ENCODE measurements at regions of chr12 and their contacts with region 1.

Region 1: GRCh38 chr12:751192-751998 is 984 bp upstream of the WNK1 start:
- DNase-seq: peak; percentile 48
- H3K4me3 ChIP-seq: peak overlapping the region; percentile 75 to 92 (median 82)
- H3K27ac ChIP-seq: peak overlapping the region; percentile 99 to 100 (median 100)
- H3K4me1 ChIP-seq: peaks cover 6 to 38% (median 8%) of the 10 kb centered on the region in 3 donors
- H3K27me3 ChIP-seq: no peaks in the 10 kb centered on the region
- CTCF ChIP-seq: peak in 5 of 6 experiments; percentile 65 to 85 (median 76)
- POLR2A ChIP-seq: peak in 3 of 4 donors; percentile 32 to 75 (median 54)

Region 2: DNA sequence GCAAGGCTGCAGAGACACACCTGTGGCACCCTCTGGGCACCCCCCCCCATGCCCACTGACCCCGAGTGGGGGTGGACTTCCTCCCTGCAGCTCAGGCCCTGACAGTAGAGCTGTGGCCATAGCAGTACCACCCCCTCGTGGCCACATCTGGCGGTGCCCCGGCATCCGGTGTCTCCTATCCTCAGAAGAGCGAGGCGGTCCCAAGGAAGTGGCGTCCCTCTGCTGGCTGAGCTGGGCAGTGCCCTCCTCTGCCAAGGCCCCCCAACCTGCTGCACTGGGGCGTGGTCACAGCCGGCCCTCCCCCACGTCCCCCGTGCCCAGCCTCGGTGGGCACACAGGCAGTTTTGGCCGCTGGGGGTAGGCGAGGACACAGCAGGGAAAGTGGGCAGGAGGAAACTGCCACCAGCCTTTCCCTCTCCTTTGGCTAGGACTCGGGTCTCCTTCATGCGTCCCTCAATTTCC is 531.5 kb before region 1 on chr12:
- intact Hi-C with region 1: no loop called
- DNase-seq: no peak
- H3K4me3 ChIP-seq: no peak overlapping the region
- H3K27ac ChIP-seq: no peak overlapping the region
- H3K4me1 ChIP-seq: no peaks in the 10 kb centered on the region
- H3K27me3 ChIP-seq: peaks cover 0 to 55% (median 0%) of the 10 kb centered on the region in 4 donors
- CTCF ChIP-seq: peak in 5 of 6 experiments; percentile 37 to 74 (median 46)
- POLR2A ChIP-seq: no peak

Region 3: DNA sequence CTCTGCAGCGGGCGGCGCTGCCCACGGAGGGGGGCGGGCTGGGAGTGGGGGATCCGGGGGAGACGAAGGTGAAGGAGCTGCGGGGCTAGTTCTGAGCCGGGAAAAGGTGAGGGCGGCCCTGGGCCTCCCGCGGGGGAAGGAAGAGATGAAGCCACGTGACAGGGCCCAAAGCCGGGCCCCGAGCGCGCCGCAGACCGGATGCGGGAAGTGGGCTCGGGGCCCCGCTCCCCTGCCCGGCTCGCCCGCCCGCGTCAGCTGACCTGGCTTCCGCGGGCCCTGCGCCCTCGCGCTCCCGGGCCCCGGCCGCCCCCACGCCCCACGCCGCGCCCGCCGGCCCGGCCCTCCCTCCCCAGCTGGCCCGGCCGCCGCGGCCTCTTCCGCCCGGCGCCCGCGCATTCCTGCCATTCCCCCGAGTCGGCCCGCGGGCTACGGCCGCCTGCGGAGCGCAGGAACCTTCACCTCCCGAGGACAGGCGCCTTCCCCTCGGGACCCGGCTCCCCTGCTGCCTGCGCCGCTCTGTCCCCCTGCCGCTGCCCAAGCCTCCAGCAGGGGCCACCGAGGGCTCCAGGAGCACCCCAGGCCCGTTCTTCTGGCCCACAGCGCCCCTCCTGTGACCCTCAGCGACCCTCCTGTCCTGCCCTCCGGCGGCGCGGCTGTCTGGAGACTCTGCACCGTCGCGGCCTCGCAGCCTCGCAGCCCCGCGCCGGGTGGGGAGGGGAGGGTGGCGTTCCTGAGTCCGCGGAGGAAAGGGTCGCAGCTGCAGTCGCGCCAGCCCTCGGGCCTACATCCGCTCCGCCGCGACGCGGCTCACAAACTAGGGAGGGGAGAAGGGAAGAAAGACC is 108.5 kb before region 1 on chr12:
- intact Hi-C with region 1: loop called (anchors 10 kb)
- DNase-seq: no peak
- H3K4me3 ChIP-seq: peak overlapping the region; percentile 65 to 88 (median 74)
- H3K27ac ChIP-seq: peak overlapping the region; percentile 98 to 100 (median 98)
- H3K4me1 ChIP-seq: peaks cover 38 to 95% (median 55%) of the 10 kb centered on the region in 3 donors
- H3K27me3 ChIP-seq: no peaks in the 10 kb centered on the region
- CTCF ChIP-seq: peak in 4 of 6 experiments; percentile 17 to 53 (median 42)
- POLR2A ChIP-seq: peak in 2 of 4 donors; percentile 48 to 60

Region 4: GRCh38 chr12:810671-811415 is 59.4 kb after region 1 on chr12:
- intact Hi-C with region 1: loop called (anchors 10 kb)
- DNase-seq: no peak
- H3K4me3 ChIP-seq: no peak overlapping the region
- H3K27ac ChIP-seq: no peak overlapping the region
- H3K4me1 ChIP-seq: peaks cover 0 to 90% (median 22%) of the 10 kb centered on the region in 3 donors
- H3K27me3 ChIP-seq: no peaks in the 10 kb centered on the region
- CTCF ChIP-seq: no peak
- POLR2A ChIP-seq: no peak

Region 5: DNA sequence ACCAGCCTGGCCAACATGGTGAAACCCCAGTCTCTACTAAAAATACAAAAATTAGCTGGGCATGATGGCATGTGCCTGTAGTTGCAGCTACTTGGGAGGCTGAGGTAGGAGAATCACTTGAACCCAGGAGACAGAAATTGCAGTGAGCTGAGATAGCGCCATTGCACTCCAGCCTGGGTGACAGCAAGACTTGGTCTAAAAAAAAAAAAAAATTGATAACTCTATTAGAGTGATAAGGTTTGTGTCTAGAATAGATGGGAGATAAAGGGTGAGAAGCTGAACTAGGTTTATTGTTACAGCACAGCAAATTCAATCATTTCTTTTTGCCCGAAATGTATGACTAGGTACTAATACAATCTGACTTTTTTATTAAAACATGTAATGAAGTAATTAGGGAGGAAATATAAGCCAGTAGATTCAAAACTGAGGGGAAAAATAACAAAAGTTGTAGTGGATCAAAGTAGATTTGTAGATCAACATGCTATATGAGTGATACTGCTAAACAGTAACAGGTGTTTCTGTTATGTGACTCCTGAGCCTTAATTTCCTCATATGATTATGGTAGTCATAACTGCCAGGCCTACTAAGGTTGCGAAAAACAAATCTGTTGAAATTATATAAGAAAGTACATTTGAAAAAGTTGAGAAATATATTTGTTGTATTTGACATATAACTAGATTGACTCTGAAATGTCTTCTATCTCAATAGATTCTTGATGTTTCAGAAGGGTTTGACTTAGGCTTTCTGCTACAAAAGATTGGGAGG is 84.5 kb after region 1 on chr12:
- intact Hi-C with region 1: no loop called
- DNase-seq: no peak
- H3K4me3 ChIP-seq: no peak overlapping the region
- H3K27ac ChIP-seq: no peak overlapping the region
- H3K4me1 ChIP-seq: peaks cover 0 to 18% (median 6%) of the 10 kb centered on the region in 3 donors
- H3K27me3 ChIP-seq: no peaks in the 10 kb centered on the region
- CTCF ChIP-seq: no peak
- POLR2A ChIP-seq: no peak

Region 6: DNA sequence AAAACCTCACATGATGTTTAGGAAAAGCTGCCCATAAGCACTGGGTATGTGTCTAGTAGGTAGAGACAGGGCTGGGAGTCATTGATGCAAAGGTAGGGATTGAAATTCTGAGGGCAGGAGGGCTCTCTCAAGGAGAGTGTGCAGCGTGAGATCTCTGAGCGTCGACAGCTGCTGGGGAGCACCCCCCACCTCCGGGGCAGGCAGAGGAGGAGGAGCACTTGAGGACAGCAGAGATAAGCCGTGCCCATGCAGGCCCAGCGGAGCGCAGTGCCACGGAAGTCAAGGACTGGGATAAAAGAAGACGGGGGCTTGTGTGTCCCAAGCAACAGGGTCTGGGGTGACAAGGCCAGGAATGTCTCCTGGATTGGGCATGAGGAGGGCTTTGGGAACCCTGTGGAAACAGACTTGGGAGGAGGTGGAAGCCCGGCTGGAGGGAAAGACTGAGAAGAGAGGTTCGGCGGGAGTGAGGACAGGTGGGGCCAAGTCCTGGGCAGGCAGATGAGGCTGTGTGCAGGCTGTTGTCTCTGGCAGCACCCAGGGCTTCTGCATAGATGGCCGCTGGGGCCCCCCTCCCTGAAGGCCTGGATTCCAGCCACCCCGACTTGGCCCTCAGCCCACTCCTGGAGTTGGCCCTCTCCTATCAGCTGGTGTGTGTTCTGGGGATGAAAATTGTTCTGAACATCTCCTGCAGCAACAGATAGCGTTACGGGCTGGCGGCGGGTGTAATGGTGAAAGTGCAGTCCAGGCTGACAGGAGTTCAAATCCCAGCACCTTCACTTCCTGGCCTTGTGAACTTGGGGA is 1165.2 kb after region 1 on chr12:
- intact Hi-C with region 1: no loop called
- DNase-seq: no peak
- H3K4me3 ChIP-seq: no peak overlapping the region
- H3K27ac ChIP-seq: no peak overlapping the region
- H3K4me1 ChIP-seq: peaks cover 0 to 8% (median 0%) of the 10 kb centered on the region in 3 donors
- H3K27me3 ChIP-seq: peaks cover 0 to 4% (median 0%) of the 10 kb centered on the region in 4 donors
- CTCF ChIP-seq: no peak
- POLR2A ChIP-seq: no peak

Measured in esophagus squamous epithelium (tissue), 5 donors.